Activated T-helper 2 cell treated with anti-CD3 and anti-CD28 coated beads, Interferon-gamma antibody, Interleukin-2, Interleukin-4, amounts not matched to agents 10 μg/mL and 5 μg/mL and 100 μg/mL, durations not matched to agents 14 hours and 24 hours and 36 hours (primary cell): ENCODE measurements at regions of chr2 and their contacts with region 1.

Region 1: DNA sequence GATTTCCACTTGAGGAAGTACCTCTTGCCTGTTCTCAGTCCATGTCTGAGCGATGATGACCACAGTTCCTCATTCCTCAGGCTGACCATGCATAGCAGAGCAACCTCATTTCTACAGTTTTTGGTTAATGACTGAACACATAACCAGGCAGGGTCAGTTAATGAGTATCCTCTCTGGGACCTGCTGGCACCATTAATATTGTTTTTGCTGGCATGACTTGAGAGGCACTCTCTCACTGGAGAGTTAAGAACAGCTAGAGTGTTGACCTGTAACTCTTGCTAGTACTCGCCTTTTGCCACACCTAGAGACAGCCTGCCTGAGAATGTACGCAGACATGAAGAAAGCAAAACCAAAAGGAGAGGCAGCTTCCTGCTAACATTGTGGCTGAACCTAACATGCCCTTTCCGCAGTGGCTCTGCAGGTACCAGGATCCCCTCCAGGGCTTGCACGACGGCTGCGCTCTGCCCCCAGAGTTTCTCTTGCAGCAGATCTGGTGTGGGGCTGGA is 23.9 kb downstream of the PECR start:
- DNase-seq: peak; percentile 52
- H3K4me3 Mint-ChIP-seq: peak overlapping the region; percentile 72
- H3K27ac Mint-ChIP-seq: peak overlapping the region; percentile 88
- H3K4me1 Mint-ChIP-seq: peaks cover 22% of the 10 kb centered on the region
- H3K27me3 Mint-ChIP-seq: no peaks in the 10 kb centered on the region

Region 2: DNA sequence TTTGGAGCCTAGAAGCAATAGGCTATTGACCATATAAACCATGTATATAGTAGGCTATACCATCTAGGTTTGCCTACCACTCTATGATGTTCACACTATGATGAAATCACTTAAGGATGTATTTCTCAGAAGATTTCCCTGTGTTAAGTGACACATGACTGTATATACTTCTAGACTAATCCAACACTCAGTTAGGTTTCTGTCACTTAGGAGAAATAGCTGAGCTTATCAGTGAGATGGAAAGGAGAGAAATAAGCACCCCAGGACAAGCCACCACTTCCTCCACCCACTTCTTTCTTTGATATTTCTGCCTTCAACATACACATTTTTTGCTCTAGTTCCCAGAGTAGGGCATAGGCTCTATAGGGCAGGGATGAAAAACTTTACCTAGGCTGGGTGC is 16.0 kb after region 1 on chr2:
- intact Hi-C with region 1: loop called (anchors 2 kb)
- DNase-seq: no peak
- H3K4me3 Mint-ChIP-seq: no peak overlapping the region
- H3K27ac Mint-ChIP-seq: peak overlapping the region; percentile 21
- H3K4me1 Mint-ChIP-seq: peaks cover 27% of the 10 kb centered on the region
- H3K27me3 Mint-ChIP-seq: no peaks in the 10 kb centered on the region

Region 3: DNA sequence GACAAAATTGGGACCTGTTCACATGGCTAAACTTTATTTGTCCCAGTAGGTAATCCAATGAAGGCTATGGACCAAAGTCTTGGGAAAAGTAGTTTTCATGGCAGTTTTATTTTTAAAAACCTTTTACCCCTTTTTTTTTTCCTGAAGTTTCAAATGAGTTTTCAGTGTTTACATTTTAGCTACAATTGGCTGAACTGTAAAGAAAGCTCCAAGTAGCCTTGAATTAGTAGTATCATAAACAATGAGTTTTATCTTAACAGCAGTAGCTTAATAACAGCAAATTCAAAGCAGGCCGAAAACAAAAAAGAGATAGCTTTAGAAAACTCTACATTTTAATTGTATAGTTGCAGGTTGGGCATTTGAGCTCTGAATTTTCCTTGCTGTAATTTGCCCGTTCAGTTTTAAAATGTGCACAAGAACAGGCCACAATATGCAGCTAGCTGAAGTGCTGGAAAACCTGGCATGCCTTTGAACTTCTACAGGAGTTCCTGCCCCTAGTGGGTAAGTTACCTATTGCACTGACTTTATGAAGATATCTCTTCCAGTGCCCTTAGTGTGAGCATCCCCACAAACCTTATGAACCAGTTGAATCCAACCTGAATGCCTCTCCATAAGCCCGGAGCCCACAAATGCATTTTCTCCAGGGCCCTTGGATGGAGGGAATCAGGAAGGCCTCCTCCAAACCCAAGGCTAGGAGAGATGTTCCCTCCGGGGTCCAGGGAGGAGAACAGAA is 158.1 kb after region 1 on chr2:
- intact Hi-C with region 1: no loop called
- DNase-seq: no peak
- H3K4me3 Mint-ChIP-seq: no peak overlapping the region
- H3K27ac Mint-ChIP-seq: no peak overlapping the region
- H3K4me1 Mint-ChIP-seq: peaks cover 44% of the 10 kb centered on the region
- H3K27me3 Mint-ChIP-seq: no peaks in the 10 kb centered on the region